Lower leg skin (tissue), 4 donors: ENCODE measurements at regions of chr3 and their contacts with region 1.

Region 1: GRCh38 chr3:62622553-62623193 is 249.3 kb upstream of the FEZF2 start:
- DNase-seq: no peak
- H3K4me3 ChIP-seq: no peak overlapping the region
- CTCF ChIP-seq: no peak
- POLR2A ChIP-seq: no peak

Region 2: DNA sequence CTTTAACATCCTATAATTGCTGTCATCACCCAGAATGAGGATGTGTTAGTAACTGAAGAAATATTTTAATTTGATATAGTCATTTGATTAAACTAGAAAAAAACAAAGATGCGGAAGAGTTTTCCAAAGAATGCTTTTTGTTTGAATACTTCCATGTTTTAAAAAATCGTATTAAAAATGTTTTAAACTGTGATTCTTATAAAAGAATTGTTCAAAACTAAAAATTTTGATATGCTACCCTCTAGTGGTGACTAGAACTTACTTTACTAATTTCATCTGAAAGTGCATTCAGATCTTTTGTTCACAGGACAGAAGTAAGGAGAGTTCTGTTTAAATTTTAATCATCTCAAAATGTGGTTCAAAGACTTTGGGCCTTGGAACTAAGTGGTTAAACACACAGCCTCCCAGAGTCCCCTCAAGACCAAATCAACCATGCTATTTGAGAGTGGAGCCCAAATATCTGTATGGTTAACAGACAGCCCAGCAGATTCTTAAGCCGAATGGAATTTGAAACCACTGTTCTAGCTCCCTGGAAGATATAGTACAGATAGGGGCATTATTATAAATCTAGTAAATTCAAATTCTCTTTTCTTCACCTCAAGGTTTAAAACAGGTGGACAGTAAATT is 610.2 kb after region 1 on chr3:
- intact Hi-C with region 1: loop called (anchors 5 kb)
- DNase-seq: no peak
- H3K4me3 ChIP-seq: no peak overlapping the region
- CTCF ChIP-seq: no peak
- POLR2A ChIP-seq: no peak